ENCODE measurements at regions of chr4 and their contacts with region 1.

Region 1: DNA sequence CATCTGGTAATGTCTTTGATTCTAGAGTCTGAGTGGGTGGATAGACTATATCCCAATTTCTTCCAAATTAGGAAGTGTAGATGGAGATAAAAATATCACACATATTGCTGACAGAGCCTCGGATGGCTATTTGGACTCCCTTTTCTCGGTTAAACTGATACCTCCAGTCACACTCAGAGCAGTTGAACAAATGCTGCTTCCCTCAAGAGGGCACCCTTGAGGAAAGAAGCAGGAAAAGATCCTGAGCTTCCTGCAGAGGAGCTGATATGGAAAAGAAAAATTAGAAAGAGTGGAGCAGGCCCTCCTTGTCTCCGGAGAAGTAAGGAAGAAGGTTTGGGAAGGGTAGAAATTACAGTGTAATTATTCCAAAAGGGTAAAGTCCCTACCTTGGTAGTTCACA is 96.2 kb upstream of the CCSER1 start:
- DNase-seq: peak in 1 of 2 donors; percentile 46
- H3K4me3 ChIP-seq: no peak overlapping the region
- H3K27ac ChIP-seq: no peak overlapping the region
- H3K4me1 ChIP-seq: no peaks in the 10 kb centered on the region
- H3K27me3 ChIP-seq: no peaks in the 10 kb centered on the region
- CTCF ChIP-seq: peak in 2 of 7 experiments; percentile 20
- EP300 ChIP-seq: no peak
- POLR2A ChIP-seq: no peak

Region 2: DNA sequence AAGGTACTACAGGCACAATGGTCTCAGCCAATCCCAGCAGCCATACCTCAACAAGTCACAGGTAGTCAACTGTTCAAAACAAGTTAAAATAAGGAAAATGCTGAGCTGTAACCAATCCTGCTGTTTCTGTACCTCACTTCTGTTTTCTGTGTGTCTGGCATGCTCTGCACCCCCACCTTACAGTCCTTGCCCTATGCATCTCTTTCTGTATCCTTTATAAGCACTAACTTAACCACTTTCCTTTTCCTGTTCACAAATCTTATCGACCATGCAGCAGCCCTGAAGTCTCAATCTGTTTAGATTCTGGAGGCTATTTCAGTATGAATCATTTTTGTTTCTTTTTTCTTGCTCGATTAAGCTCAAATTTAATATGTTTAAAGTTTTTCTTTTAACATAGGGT is 961.5 kb before region 1 on chr4:
- intact Hi-C with region 1: no loop called
- DNase-seq: no peak
- H3K4me3 ChIP-seq: no peak overlapping the region
- H3K27ac ChIP-seq: no peak overlapping the region
- H3K4me1 ChIP-seq: no peaks in the 10 kb centered on the region
- H3K27me3 ChIP-seq: no peaks in the 10 kb centered on the region
- CTCF ChIP-seq: no peak
- EP300 ChIP-seq: no peak
- POLR2A ChIP-seq: no peak

Region 3: DNA sequence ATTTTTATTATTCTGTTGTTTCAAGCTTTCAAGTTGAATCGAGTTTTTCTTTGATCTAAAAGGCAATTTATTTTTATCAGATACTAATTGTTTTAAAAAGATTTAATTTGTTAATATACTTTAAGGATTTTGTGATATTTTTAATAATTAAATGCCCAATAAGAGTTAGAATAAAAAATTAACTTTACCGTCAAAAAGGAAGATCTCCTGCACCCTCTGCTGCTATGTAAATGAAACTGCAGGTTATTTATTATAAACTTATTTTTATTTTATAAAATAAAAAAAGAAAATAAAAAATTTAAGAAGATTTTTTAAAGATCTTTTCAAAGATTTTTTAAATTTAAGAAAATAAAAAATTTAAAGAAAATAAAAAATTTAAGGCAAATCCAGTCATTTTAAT is 262.4 kb after region 1 on chr4:
- intact Hi-C with region 1: loop called (anchors 10 kb)
- DNase-seq: peak in 1 of 2 donors; percentile 13
- H3K4me3 ChIP-seq: no peak overlapping the region
- H3K27ac ChIP-seq: no peak overlapping the region
- H3K4me1 ChIP-seq: no peaks in the 10 kb centered on the region
- H3K27me3 ChIP-seq: no peaks in the 10 kb centered on the region
- CTCF ChIP-seq: peak in 2 of 7 experiments; percentile 39 to 55
- EP300 ChIP-seq: no peak
- POLR2A ChIP-seq: no peak

Region 4: GRCh38 chr4:90415116-90415515 is 384.2 kb after region 1 on chr4:
- intact Hi-C with region 1: no loop called
- DNase-seq: no peak
- H3K4me3 ChIP-seq: no peak overlapping the region
- H3K27ac ChIP-seq: no peak overlapping the region
- H3K4me1 ChIP-seq: no peaks in the 10 kb centered on the region
- H3K27me3 ChIP-seq: no peaks in the 10 kb centered on the region
- CTCF ChIP-seq: no peak
- EP300 ChIP-seq: no peak
- POLR2A ChIP-seq: no peak

Measured in stomach (tissue), 19 donors.